ENCODE measurements at regions of chr13 and their contacts with region 1.

Region 1: GRCh38 chr13:102913914-102914313 is 68.1 kb downstream of the ERCC5 start:
- DNase-seq: no peak
- ATAC-seq: peak; percentile 14 to 40
- H3K4me3 ChIP-seq: no peak overlapping the region
- H3K27ac ChIP-seq: no peak overlapping the region
- H3K4me1 ChIP-seq: no peaks in the 10 kb centered on the region
- H3K27me3 ChIP-seq: no peaks in the 10 kb centered on the region

Region 2: GRCh38 chr13:103140001-103140671 is 226.2 kb after region 1 on chr13:
- intact Hi-C with region 1: loop called in 3 of 4 experiments (anchors 5 to 10 kb)
- DNase-seq: no peak
- ATAC-seq: peak in 1 of 2 donors; percentile 61
- H3K4me3 ChIP-seq: no peak overlapping the region
- H3K27ac ChIP-seq: no peak overlapping the region
- H3K4me1 ChIP-seq: no peaks in the 10 kb centered on the region
- H3K27me3 ChIP-seq: no peaks in the 10 kb centered on the region